Activated CD4-positive, alpha-beta T cell treated with anti-CD3 and anti-CD28 coated beads, Interleukin-2, amount 10 ng/mL, durations not matched to agents 24 days and 14 days (primary cell): ENCODE measurements at regions of chr7 and their contacts with region 1.

Region 1: DNA sequence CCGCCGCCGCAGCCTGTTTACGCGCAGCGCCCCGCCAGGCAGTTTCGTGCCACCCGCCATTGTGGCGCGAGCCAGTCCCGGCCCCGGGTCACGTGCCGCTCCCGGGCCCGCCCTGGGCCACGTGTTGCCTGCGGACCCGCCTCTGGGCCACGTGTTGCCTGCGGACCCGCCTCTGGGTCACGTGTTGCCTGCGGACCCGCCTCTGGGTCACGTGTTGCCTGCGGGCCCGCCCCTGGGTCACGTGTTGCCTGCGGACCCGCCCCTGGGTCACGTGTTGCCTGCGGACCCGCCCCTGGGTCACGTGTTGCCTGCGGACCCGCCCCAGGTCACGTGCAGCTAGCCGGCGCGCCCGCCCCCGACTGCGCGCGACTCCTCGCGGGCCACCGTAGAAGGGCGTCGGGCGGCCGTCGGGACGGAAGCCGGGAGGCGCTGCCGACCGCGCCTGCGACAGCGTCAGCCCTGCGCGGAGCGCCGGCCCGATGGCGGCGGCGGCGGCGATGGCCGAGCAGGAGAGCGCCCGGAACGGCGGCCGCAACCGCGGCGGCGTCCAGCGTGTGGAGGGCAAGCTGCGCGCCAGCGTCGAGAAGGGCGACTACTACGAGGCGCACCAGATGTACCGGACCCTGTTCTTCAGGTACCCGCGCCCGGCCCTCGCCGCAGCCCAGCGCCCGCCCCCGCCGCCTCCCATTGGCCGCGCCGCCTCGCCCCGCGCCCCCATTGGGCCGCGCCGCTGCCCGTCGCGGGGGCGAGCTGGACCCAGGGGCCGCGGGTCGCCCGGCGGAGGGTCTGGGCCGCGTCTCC is at the start of gene GET4:
- DNase-seq: peak; percentile 100
- H3K4me3 Mint-ChIP-seq: peak within 1 kb of the TSS; percentile 98
- H3K27ac Mint-ChIP-seq: peak within 1 kb of the TSS; percentile 92
- H3K4me1 Mint-ChIP-seq: peaks cover 17% of the 10 kb centered on the region
- H3K27me3 Mint-ChIP-seq: no peaks in the 10 kb centered on the region
- total RNA-seq, gene GET4: 35.8 and 41.0 TPM in 2 replicates

Region 2: GRCh38 chr7:726084-726853 is 150.1 kb before region 1 on chr7 and contains the start of gene DNAAF5:
- intact Hi-C with region 1: loop called (anchors 1 kb)
- DNase-seq: peak; percentile 97
- H3K4me3 Mint-ChIP-seq: peak within 1 kb of the TSS; percentile 95
- H3K27ac Mint-ChIP-seq: peak within 1 kb of the TSS; percentile 96
- H3K4me1 Mint-ChIP-seq: peaks cover 18% of the 10 kb centered on the region
- H3K27me3 Mint-ChIP-seq: no peaks in the 10 kb centered on the region
- total RNA-seq, gene DNAAF5: 49.4 and 50.6 TPM in 2 replicates

Region 3: GRCh38 chr7:816300-816750 is 60.0 kb before region 1 on chr7:
- intact Hi-C with region 1: loop called (anchors 2 kb)
- DNase-seq: peak; percentile 99
- H3K4me3 Mint-ChIP-seq: peak overlapping the region; percentile 76
- H3K27ac Mint-ChIP-seq: no peak overlapping the region
- H3K4me1 Mint-ChIP-seq: peaks cover 48% of the 10 kb centered on the region
- H3K27me3 Mint-ChIP-seq: peaks cover 25% of the 10 kb centered on the region

Region 4: DNA sequence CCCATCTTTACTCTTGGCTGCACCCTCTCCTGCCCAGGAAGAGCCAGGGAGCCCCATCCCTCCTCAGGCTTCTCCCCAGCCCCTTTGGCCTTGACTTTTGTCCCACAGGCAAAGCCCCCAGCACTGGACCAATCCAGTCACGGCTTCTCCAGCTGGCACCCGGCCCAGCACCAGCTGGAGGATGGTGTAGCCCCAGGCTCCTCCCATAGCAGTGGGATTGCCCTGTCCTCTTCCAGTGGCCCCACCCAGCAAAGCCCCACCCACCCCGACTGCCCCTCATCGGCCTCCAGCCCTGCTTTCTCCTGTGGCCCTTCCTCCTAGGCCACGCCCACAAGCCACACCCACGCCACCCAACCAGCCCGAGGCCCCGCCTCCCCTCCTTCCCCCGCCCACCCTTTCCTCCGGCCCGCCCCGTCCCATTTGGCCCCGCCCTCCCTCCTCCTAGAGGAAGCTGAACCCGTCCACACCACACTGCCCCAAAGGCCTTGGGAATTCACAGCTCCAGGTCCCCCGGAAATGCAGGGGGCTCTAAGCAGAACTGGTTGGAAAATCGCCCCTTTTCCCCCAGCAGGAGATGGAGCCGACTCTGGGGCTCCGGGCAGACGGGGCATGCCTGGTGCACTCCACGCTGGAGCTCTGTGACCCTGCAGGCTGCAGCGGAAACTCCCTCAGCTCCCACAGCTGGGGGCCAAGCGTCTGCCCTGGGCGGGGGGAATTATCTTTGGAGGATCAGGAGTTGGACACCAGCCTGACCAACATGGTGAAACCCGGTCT is 25.2 kb after region 1 on chr7:
- intact Hi-C with region 1: loop called (anchors 2 kb)
- DNase-seq: peak; percentile 86
- H3K4me3 Mint-ChIP-seq: no peak overlapping the region
- H3K27ac Mint-ChIP-seq: no peak overlapping the region
- H3K4me1 Mint-ChIP-seq: no peaks in the 10 kb centered on the region
- H3K27me3 Mint-ChIP-seq: peaks cover 2% of the 10 kb centered on the region

Region 5: GRCh38 chr7:974820-975681 is 98.7 kb after region 1 on chr7 and contains the start of gene COX19:
- intact Hi-C with region 1: loop called (anchors 1 kb)
- DNase-seq: peak; percentile 96
- H3K4me3 Mint-ChIP-seq: peak within 1 kb of the TSS; percentile 95
- H3K27ac Mint-ChIP-seq: peak within 1 kb of the TSS; percentile 93
- H3K4me1 Mint-ChIP-seq: peaks cover 13% of the 10 kb centered on the region
- H3K27me3 Mint-ChIP-seq: no peaks in the 10 kb centered on the region
- total RNA-seq, gene COX19: 15.3 and 22.4 TPM in 2 replicates

Region 6: GRCh38 chr7:1137510-1138167 is 261.3 kb after region 1 on chr7:
- intact Hi-C with region 1: loop called (anchors 5 kb)
- DNase-seq: no peak
- H3K4me3 Mint-ChIP-seq: peak overlapping the region; percentile 87
- H3K27ac Mint-ChIP-seq: peak overlapping the region; percentile 93
- H3K4me1 Mint-ChIP-seq: peaks cover 10% of the 10 kb centered on the region
- H3K27me3 Mint-ChIP-seq: no peaks in the 10 kb centered on the region

Region 7: GRCh38 chr7:1579481-1580421 is 703.4 kb after region 1 on chr7:
- intact Hi-C with region 1: no loop called
- DNase-seq: peak; percentile 92
- H3K4me3 Mint-ChIP-seq: no peak overlapping the region
- H3K27ac Mint-ChIP-seq: no peak overlapping the region
- H3K4me1 Mint-ChIP-seq: peaks cover 7% of the 10 kb centered on the region
- H3K27me3 Mint-ChIP-seq: no peaks in the 10 kb centered on the region